ENCODE measurements at regions of chr5 and their contacts with region 1.

Region 1: DNA sequence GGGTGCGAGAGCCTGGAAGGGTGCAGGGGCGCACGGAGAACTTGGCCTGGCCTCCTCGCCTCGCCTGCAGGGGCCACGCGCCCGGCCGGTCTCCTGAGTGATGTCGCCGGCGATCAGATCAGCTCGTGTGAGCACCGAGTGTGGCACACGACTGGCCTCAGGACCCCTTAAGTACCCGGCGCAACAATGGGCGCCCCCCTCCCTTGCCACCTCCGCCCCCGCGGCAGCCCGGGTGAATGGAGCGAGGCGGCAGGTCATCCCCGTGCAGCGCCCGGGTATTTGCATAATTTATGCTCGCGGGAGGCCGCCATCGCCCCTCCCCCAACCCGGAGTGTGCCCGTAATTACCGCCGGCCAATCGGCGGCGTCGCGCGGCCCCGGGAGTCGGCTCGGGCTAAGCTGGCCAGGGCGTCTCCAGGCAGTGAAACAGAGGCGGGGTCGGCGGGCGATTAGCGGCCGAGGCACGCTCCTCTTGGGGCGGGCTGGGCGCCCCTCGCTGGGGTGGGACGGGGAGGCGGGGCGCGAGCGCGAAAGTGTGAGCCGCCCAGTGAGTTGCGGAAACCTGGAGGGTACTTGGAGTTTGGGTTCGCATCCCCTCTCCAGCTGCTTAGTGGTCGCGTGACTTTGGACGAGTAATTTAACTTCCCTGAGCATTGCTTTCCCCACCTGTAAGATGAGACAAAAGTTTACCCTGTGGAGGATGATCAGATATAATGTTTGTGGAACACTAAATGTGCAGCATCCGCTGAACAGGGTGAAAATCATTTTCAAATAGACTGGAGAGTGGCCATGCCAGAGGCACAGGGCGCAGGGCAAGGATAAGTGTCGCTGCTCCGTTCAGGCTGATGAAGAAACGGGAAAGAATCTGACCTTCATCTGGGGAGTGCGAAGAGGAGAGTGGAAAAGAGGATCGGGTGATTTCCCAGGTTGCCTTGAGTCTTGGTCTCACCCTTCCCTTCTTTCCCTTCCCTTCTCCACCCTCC is at the start of gene NEUROG1:
- DNase-seq: no peak
- H3K4me3 Mint-ChIP-seq: no peak within 1 kb of the TSS
- H3K27ac Mint-ChIP-seq: no peak within 1 kb of the TSS
- H3K4me1 Mint-ChIP-seq: peaks cover 5% of the 10 kb centered on the region
- H3K27me3 Mint-ChIP-seq: peaks cover 73% of the 10 kb centered on the region
- total RNA-seq, gene NEUROG1: not detected

Region 2: GRCh38 chr5:135488727-135489465 is 47.2 kb before region 1 on chr5:
- CTCF ChIA-PET with region 1: no interaction called
- POLR2A ChIA-PET with region 1: no interaction called
- intact Hi-C with region 1: loop called (anchors 2 kb)
- DNase-seq: no peak
- H3K4me3 Mint-ChIP-seq: no peak overlapping the region
- H3K27ac Mint-ChIP-seq: no peak overlapping the region
- H3K4me1 Mint-ChIP-seq: peaks cover 3% of the 10 kb centered on the region
- H3K27me3 Mint-ChIP-seq: peaks cover 74% of the 10 kb centered on the region

Region 3: DNA sequence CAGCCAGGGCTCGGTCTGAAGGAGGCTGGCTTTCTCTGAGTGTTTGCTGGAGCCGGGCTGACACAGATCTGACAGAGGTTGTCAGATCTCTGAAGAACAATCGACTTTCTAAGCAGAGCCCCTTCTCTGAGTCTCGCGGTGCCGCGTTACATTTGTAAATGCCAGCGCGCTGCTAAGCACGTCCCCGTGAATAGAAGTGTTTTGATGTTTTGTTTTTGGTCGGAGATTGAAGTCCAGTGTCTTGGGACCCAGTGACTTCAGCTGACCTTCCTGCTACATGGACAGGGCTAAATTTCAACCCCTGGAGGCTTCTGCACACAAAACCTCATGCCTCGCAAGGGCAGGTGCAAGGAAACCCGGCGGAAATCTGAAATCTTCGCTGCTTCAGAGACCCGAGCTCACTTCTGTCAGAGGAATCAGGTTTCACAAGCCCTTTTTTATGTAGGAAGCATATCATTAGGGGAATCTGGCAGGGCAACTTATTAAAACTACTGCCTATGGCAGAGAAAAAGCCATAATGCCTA is 27.6 kb before region 1 on chr5:
- CTCF ChIA-PET with region 1: no interaction called
- POLR2A ChIA-PET with region 1: no interaction called
- intact Hi-C with region 1: no loop called
- DNase-seq: no peak
- H3K4me3 Mint-ChIP-seq: no peak overlapping the region
- H3K27ac Mint-ChIP-seq: no peak overlapping the region
- H3K4me1 Mint-ChIP-seq: peaks cover 14% of the 10 kb centered on the region
- H3K27me3 Mint-ChIP-seq: peaks cover 38% of the 10 kb centered on the region

Region 4: DNA sequence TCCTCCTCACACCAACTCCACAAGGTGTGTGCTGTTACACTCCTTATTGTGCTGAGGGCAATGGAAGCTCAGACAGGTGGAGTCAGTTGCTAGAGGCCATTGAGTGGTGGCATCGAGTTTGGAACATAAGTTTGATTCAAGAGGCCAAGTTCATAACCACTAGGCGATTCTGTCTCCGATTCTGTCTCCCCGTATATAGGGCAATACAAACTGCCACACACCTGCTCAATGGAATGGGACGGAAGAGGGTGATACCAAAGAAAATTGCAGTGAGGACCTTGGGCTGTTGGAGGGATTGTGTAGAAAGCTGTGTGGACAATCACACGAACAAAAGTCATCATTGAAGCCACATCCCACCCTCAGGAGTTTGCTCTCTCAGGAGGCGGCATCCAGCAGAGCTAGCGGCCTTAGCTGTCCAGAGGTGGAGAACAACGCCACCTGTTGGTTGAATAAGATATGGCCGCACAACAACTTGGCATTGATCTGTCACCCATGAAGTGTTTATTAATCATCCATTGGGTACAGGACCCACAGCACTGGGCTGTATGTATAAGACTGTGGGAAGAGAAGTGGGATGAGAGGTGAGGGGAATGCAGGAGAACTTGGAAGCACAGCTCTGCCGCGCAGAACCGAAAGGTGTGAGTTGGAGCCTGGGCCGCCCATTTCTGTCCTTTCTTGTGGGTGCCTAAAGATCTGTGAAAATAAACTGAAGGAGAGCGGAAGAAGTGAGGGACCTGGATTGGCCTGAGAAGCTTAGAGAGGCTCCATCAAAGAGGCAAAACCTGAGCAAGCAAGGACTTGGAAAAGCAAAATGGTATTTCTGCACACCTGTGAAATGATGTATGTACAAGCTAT is 15.7 kb after region 1 on chr5:
- CTCF ChIA-PET with region 1: interaction called, 20 read pairs
- POLR2A ChIA-PET with region 1: no interaction called
- intact Hi-C with region 1: no loop called
- DNase-seq: peak; percentile 73
- H3K4me3 Mint-ChIP-seq: no peak overlapping the region
- H3K27ac Mint-ChIP-seq: no peak overlapping the region
- H3K4me1 Mint-ChIP-seq: no peaks in the 10 kb centered on the region
- H3K27me3 Mint-ChIP-seq: peaks cover 54% of the 10 kb centered on the region

Measured in activated CD4-positive, alpha-beta memory T cell treated with anti-CD3 and anti-CD28 coated beads for 36 hours (primary cell).